Activated CD4-positive, alpha-beta T cell treated with anti-CD3 and anti-CD28 coated beads for 36 hours (primary cell): ENCODE measurements at regions of chr1 and their contacts with region 1.

Region 1: GRCh38 chr1:110312188-110313121 is 26.7 kb upstream of the RBM15 start:
- DNase-seq: peak; percentile 86
- ATAC-seq: peak; percentile 98
- H3K4me3 Mint-ChIP-seq: no peak overlapping the region
- H3K27ac Mint-ChIP-seq: no peak overlapping the region
- H3K4me1 Mint-ChIP-seq: no peaks in the 10 kb centered on the region
- H3K27me3 Mint-ChIP-seq: no peaks in the 10 kb centered on the region

Region 2: DNA sequence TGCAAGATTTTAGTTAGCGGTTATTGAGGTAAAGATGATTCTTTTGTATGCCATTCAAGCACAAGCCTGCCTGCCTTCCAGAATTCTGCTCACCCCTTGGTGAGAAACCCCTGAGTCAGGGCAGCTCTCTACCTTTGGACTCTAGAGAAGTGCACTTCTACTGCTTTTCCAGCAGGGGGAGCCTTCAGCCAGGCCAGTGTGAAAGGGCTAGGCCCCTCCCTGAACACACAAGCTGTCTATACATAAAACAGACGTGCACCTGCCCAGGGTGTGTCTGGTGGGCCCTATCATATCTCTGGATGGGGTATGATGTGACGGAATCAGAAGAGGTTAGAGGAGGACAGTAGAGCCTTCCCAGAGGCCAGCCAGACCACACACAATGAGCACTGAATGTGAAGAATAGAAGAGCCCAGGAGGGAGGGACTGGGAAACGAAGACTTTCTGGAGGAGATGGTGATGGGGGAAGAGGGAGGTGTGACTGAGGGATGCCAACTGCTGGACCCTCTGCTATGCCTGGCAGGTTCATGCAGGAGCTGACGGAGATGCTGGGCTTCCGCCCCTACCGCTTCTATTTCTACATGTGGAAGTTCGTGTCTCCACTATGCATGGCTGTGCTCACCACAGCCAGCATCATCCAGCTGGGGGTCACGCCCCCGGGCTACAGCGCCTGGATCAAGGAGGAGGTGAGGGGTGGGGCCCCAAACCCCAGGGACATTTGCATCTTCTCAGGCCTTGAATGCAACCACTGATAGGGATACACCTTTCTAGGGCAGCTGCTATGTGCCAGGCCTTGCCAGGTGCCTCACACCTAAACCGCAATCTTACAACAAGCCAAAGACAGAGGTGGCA is 115.3 kb before region 1 on chr1:
- CTCF ChIA-PET with region 1: interaction called, 547 read pairs
- POLR2A ChIA-PET with region 1: interaction called, 3 read pairs
- intact Hi-C with region 1: no loop called
- DNase-seq: peak; percentile 77
- ATAC-seq: peak; percentile 97
- H3K4me3 Mint-ChIP-seq: no peak overlapping the region
- H3K27ac Mint-ChIP-seq: no peak overlapping the region
- H3K4me1 Mint-ChIP-seq: no peaks in the 10 kb centered on the region
- H3K27me3 Mint-ChIP-seq: no peaks in the 10 kb centered on the region

Region 3: DNA sequence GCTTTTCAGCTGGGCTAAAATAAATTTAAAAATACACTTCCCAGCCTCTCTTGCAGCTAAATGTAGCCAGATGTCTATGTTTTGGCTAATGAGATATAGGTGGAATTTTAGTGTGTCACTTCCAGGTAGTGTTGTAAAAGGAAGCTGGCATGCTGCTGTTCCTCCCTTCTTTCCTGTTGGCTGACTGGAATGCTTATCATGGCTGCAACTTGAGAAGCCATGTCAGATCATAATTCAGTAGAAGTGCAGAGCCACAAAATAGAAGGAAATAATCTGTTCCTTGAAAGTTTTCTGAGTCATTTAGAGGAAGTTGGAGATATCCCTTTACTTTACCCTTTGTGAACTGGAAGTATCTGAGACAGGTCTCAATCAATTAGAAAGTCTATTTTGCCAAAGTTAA is 15.8 kb after region 1 on chr1:
- CTCF ChIA-PET with region 1: interaction called, 10 read pairs
- POLR2A ChIA-PET with region 1: no interaction called
- intact Hi-C with region 1: no loop called
- DNase-seq: no peak
- ATAC-seq: no peak
- H3K4me3 Mint-ChIP-seq: no peak overlapping the region
- H3K27ac Mint-ChIP-seq: no peak overlapping the region
- H3K4me1 Mint-ChIP-seq: no peaks in the 10 kb centered on the region
- H3K27me3 Mint-ChIP-seq: no peaks in the 10 kb centered on the region

Region 4: GRCh38 chr1:110360431-110360830 is 48.0 kb after region 1 on chr1:
- CTCF ChIA-PET with region 1: no interaction called
- POLR2A ChIA-PET with region 1: no interaction called
- intact Hi-C with region 1: no loop called
- DNase-seq: no peak
- ATAC-seq: no peak
- H3K4me3 Mint-ChIP-seq: no peak overlapping the region
- H3K27ac Mint-ChIP-seq: no peak overlapping the region
- H3K4me1 Mint-ChIP-seq: peaks cover 10% of the 10 kb centered on the region
- H3K27me3 Mint-ChIP-seq: no peaks in the 10 kb centered on the region